Caco-2 (cell line): ENCODE measurements at regions of chr6 and their contacts with region 1.

Region 1: GRCh38 chr6:105898286-105898685 is 187.8 kb upstream of the PRDM1 start:
- DNase-seq: no peak
- H3K4me3 ChIP-seq: no peak overlapping the region
- H3K4me3 Mint-ChIP-seq: no peak overlapping the region
- H3K27ac Mint-ChIP-seq: no peak overlapping the region
- H3K4me1 ChIP-seq: peaks cover 37% of the 10 kb centered on the region
- H3K4me1 Mint-ChIP-seq: peaks cover 11% of the 10 kb centered on the region
- H3K27me3 ChIP-seq: no peaks in the 10 kb centered on the region
- H3K27me3 Mint-ChIP-seq: no peaks in the 10 kb centered on the region
- CTCF ChIP-seq: no peak

Region 2: DNA sequence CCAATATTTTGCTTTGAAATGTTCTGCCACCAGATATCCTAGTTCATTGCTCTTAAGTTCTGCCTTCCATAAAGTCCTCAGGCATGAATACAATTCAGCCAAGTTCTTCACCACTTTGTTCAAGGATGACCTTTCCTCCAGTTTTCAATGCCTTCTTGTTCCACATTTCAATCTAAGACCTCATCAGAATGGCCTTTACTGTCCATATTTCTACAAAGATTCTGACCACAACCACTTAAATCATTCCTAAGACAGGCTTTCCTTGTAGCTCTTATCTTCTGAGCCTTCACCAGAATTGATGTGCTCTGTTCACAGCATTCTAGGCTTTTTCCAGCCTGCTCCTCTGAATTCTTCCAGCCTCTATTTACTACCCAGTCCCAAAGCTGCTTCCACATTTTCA is 1357.5 kb before region 1 on chr6:
- CTCF ChIA-PET with region 1: no interaction called
- POLR2A ChIA-PET with region 1: no interaction called
- intact Hi-C with region 1: no loop called
- DNase-seq: no peak
- H3K4me3 ChIP-seq: no peak overlapping the region
- H3K4me3 Mint-ChIP-seq: no peak overlapping the region
- H3K27ac Mint-ChIP-seq: no peak overlapping the region
- H3K4me1 ChIP-seq: no peaks in the 10 kb centered on the region
- H3K4me1 Mint-ChIP-seq: no peaks in the 10 kb centered on the region
- H3K27me3 ChIP-seq: no peaks in the 10 kb centered on the region
- H3K27me3 Mint-ChIP-seq: no peaks in the 10 kb centered on the region
- CTCF ChIP-seq: no peak

Region 3: DNA sequence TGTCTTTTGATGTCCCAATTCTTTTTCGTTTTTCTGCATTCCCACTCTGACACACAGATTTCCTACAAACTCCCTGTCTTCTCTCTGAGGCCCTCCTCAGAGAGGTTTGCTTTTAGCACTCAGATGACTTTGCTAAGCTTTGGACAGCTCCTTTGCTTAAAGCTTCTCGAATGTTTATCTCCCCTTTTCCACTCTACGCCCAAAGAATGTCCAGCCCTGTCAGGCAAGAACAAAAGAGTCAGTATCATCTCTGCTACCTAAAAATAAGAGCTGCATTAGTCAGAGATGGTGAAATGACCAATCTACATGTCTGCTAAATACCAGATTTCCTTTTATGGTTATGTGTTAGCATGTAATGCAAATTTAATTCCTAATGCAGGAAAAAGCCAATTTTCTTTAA is 552.2 kb before region 1 on chr6:
- CTCF ChIA-PET with region 1: no interaction called
- POLR2A ChIA-PET with region 1: no interaction called
- intact Hi-C with region 1: no loop called
- DNase-seq: peak in 1 of 2 experiments; percentile 3
- H3K4me3 ChIP-seq: no peak overlapping the region
- H3K4me3 Mint-ChIP-seq: no peak overlapping the region
- H3K27ac Mint-ChIP-seq: peak overlapping the region; percentile 51
- H3K4me1 ChIP-seq: no peaks in the 10 kb centered on the region
- H3K4me1 Mint-ChIP-seq: peaks cover 7% of the 10 kb centered on the region
- H3K27me3 ChIP-seq: no peaks in the 10 kb centered on the region
- H3K27me3 Mint-ChIP-seq: no peaks in the 10 kb centered on the region
- CTCF ChIP-seq: no peak

Region 4: GRCh38 chr6:105569706-105570105 is 328.6 kb before region 1 on chr6:
- CTCF ChIA-PET with region 1: no interaction called
- POLR2A ChIA-PET with region 1: no interaction called
- intact Hi-C with region 1: loop called (anchors 1 kb)
- DNase-seq: peak in 1 of 2 experiments; percentile 72
- H3K4me3 ChIP-seq: no peak overlapping the region
- H3K4me3 Mint-ChIP-seq: no peak overlapping the region
- H3K27ac Mint-ChIP-seq: no peak overlapping the region
- H3K4me1 ChIP-seq: peaks cover 41% of the 10 kb centered on the region
- H3K4me1 Mint-ChIP-seq: peaks cover 27% of the 10 kb centered on the region
- H3K27me3 ChIP-seq: no peaks in the 10 kb centered on the region
- H3K27me3 Mint-ChIP-seq: peaks cover 8% of the 10 kb centered on the region
- CTCF ChIP-seq: no peak

Region 5: GRCh38 chr6:105810105-105810921 is 88.0 kb before region 1 on chr6:
- CTCF ChIA-PET with region 1: no interaction called
- POLR2A ChIA-PET with region 1: no interaction called
- intact Hi-C with region 1: loop called (anchors 2 kb)
- DNase-seq: no peak
- H3K4me3 ChIP-seq: no peak overlapping the region
- H3K4me3 Mint-ChIP-seq: no peak overlapping the region
- H3K27ac Mint-ChIP-seq: peak overlapping the region; percentile 68
- H3K4me1 ChIP-seq: peaks cover 23% of the 10 kb centered on the region
- H3K4me1 Mint-ChIP-seq: peaks cover 16% of the 10 kb centered on the region
- H3K27me3 ChIP-seq: no peaks in the 10 kb centered on the region
- H3K27me3 Mint-ChIP-seq: no peaks in the 10 kb centered on the region
- CTCF ChIP-seq: no peak

Region 6: DNA sequence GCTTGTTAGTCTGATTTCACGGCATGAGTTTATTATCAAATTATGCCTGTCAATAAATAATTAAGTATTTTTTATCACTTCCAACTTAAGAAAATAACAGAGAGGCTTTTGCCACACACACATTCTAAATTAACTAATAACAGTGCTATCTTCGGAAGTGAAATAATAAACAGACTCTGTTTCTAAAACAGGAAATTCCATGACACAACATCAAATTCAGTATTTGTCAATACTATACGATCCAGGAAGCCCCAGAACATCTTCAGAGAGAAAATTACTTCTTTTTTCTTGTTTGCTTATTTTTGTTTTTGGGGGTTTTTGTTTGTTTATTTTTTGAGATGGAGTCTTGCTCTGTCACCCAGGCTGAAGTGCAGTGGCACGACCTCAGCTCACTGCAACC is 37.1 kb after region 1 on chr6:
- CTCF ChIA-PET with region 1: no interaction called
- POLR2A ChIA-PET with region 1: no interaction called
- intact Hi-C with region 1: loop called (anchors 1 kb)
- DNase-seq: no peak
- H3K4me3 ChIP-seq: no peak overlapping the region
- H3K4me3 Mint-ChIP-seq: no peak overlapping the region
- H3K27ac Mint-ChIP-seq: peak overlapping the region; percentile 49
- H3K4me1 ChIP-seq: peaks cover 24% of the 10 kb centered on the region
- H3K4me1 Mint-ChIP-seq: peaks cover 19% of the 10 kb centered on the region
- H3K27me3 ChIP-seq: no peaks in the 10 kb centered on the region
- H3K27me3 Mint-ChIP-seq: no peaks in the 10 kb centered on the region
- CTCF ChIP-seq: no peak

Region 7: GRCh38 chr6:105982761-105983540 is 84.7 kb after region 1 on chr6:
- CTCF ChIA-PET with region 1: no interaction called
- POLR2A ChIA-PET with region 1: no interaction called
- intact Hi-C with region 1: loop called (anchors 1 kb)
- DNase-seq: no peak
- H3K4me3 ChIP-seq: no peak overlapping the region
- H3K4me3 Mint-ChIP-seq: no peak overlapping the region
- H3K27ac Mint-ChIP-seq: no peak overlapping the region
- H3K4me1 ChIP-seq: peaks cover 8% of the 10 kb centered on the region
- H3K4me1 Mint-ChIP-seq: peaks cover 21% of the 10 kb centered on the region
- H3K27me3 ChIP-seq: no peaks in the 10 kb centered on the region
- H3K27me3 Mint-ChIP-seq: no peaks in the 10 kb centered on the region
- CTCF ChIP-seq: no peak

Region 8: DNA sequence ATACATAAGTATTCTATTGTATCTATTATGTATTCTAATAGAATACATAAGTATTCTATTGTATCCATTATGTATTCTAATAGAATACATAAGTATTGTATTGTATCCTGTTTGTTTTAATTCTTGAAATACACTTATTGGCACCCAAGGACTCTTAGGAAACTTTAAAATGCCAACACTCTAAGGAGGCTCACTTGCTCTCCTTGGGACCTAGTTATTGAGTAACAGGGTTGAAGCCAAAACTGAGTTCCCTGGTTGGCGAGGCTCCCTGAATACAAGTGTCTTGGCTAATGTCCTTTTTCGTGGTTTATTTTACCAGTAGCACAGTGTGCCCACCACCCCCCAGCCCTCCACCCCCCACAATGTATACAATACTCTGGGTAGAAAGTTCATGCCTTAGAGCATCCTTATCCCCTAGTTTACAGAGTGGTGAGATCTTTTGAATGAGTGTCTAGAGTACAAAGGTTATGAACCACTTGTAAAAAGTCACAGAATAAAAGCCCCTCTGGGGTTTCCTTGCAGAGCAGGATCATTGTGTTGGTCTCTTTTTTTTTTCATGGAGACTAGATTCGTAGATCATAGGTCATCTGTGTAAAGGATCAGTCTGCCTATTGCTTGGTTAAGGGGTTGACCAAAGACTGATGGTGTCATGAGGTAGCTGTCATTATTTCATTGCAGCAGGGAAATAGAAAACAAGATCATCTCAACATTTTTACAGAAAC is 155.4 kb after region 1 on chr6:
- CTCF ChIA-PET with region 1: no interaction called
- POLR2A ChIA-PET with region 1: no interaction called
- intact Hi-C with region 1: loop called (anchors 1 kb)
- DNase-seq: no peak
- H3K4me3 ChIP-seq: no peak overlapping the region
- H3K4me3 Mint-ChIP-seq: peak overlapping the region; percentile 56
- H3K27ac Mint-ChIP-seq: peak overlapping the region; percentile 74
- H3K4me1 ChIP-seq: peaks cover 81% of the 10 kb centered on the region
- H3K4me1 Mint-ChIP-seq: peaks cover 57% of the 10 kb centered on the region
- H3K27me3 ChIP-seq: no peaks in the 10 kb centered on the region
- H3K27me3 Mint-ChIP-seq: no peaks in the 10 kb centered on the region
- CTCF ChIP-seq: no peak